Panc1 (cell line): ENCODE measurements at regions of chr21 and their contacts with region 1.

Region 1: GRCh38 chr21:36113647-36114428 is 21.0 kb upstream of the CBR3 start:
- DNase-seq: no peak
- ATAC-seq: peak; percentile 66; the same call in 1 of the 2 replicates
- H3K4me3 ChIP-seq: peak overlapping the region; percentile 49 to 73
- H3K27ac ChIP-seq: peak overlapping the region; percentile 69; the same call in 1 of the 2 replicates
- H3K4me1 ChIP-seq: peaks cover 3% of the 10 kb centered on the region
- H3K27me3 ChIP-seq: no peaks in the 10 kb centered on the region
- CTCF ChIP-seq: no peak

Region 2: GRCh38 chr21:35730325-35730724 is 383.5 kb before region 1 on chr21:
- CTCF ChIA-PET with region 1: no interaction called
- POLR2A ChIA-PET with region 1: no interaction called
- in situ Hi-C with region 1: no loop called
- intact Hi-C with region 1: no loop called
- DNase-seq: no peak
- ATAC-seq: no peak
- H3K4me3 ChIP-seq: no peak overlapping the region
- H3K27ac ChIP-seq: no peak overlapping the region
- H3K4me1 ChIP-seq: no peaks in the 10 kb centered on the region
- H3K27me3 ChIP-seq: peaks cover 4% of the 10 kb centered on the region; the same call in 1 of the 2 replicates
- CTCF ChIP-seq: no peak

Region 3: GRCh38 chr21:36044056-36044455 is 69.8 kb before region 1 on chr21:
- CTCF ChIA-PET with region 1: interaction called, 6 read pairs
- POLR2A ChIA-PET with region 1: no interaction called
- in situ Hi-C with region 1: no loop called
- intact Hi-C with region 1: loop called (anchors 2 kb)
- DNase-seq: no peak
- ATAC-seq: no peak
- H3K4me3 ChIP-seq: no peak overlapping the region
- H3K27ac ChIP-seq: no peak overlapping the region
- H3K4me1 ChIP-seq: no peaks in the 10 kb centered on the region
- H3K27me3 ChIP-seq: no peaks in the 10 kb centered on the region
- CTCF ChIP-seq: no peak

Region 4: DNA sequence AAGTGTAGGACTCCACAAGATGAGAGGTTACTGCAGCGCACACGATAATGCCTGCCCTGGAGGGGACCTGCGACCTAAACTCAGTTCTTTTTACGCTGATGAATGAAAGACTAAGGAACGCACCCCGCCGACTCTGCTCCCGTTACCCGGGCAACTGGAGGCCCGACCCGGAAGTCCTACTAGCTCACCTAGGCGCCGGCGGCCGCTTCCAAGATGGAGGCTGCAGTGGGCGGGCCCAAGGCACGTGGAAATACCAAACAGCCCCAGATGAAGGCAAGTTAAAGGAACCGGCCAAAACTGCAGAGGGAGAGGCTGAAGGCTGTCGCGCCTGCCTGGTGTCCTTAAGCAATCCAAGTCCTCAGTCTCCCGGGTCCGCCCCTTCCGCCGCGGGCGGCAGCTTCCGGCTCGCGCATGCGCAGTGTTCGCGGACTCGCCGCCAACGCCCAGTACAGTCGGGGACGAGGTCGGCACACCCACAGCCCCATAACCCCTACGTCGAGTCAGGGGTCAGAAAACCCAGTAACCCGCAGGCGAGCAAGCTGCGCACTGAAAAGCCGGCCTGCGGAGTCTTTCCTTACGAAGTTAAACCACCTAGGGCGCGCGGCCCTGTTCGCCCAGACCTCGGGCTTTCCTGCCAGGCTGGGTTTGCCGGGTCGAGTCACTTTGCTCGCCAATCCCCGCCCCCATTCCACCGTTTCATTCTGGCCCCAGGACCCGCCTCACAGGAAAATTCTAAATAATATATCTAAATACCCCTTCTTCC is 53.5 kb before region 1 on chr21 and contains the start of gene SETD4:
- CTCF ChIA-PET with region 1: interaction called, 4 read pairs
- POLR2A ChIA-PET with region 1: interaction called, 12 read pairs
- in situ Hi-C with region 1: no loop called
- intact Hi-C with region 1: no loop called
- DNase-seq: peak; percentile 81
- ATAC-seq: peak; percentile 97
- H3K4me3 ChIP-seq: peak within 1 kb of the TSS; percentile 74 to 87
- H3K27ac ChIP-seq: peak within 1 kb of the TSS; percentile 93
- H3K4me1 ChIP-seq: peaks cover 3% of the 10 kb centered on the region; the same call in 1 of the 2 replicates
- H3K27me3 ChIP-seq: no peaks in the 10 kb centered on the region
- CTCF ChIP-seq: no peak
- total RNA-seq, gene SETD4: 15.6 TPM

Region 5: GRCh38 chr21:36347278-36347961 is 233.6 kb after region 1 on chr21:
- CTCF ChIA-PET with region 1: no interaction called
- POLR2A ChIA-PET with region 1: no interaction called
- in situ Hi-C with region 1: no loop called
- intact Hi-C with region 1: no loop called
- DNase-seq: no peak
- ATAC-seq: no peak
- H3K4me3 ChIP-seq: no peak overlapping the region
- H3K27ac ChIP-seq: no peak overlapping the region
- H3K4me1 ChIP-seq: no peaks in the 10 kb centered on the region
- H3K27me3 ChIP-seq: no peaks in the 10 kb centered on the region
- CTCF ChIP-seq: no peak

Region 6: GRCh38 chr21:36661511-36662309 is 547.9 kb after region 1 on chr21:
- CTCF ChIA-PET with region 1: no interaction called
- POLR2A ChIA-PET with region 1: no interaction called
- in situ Hi-C with region 1: no loop called
- intact Hi-C with region 1: no loop called
- DNase-seq: no peak
- ATAC-seq: peak; percentile 85
- H3K4me3 ChIP-seq: no peak overlapping the region
- H3K27ac ChIP-seq: no peak overlapping the region
- H3K4me1 ChIP-seq: no peaks in the 10 kb centered on the region; the same call in 1 of the 2 replicates
- H3K27me3 ChIP-seq: no peaks in the 10 kb centered on the region
- CTCF ChIP-seq: peak; percentile 78